Heart left ventricle (tissue), 16 donors: ENCODE measurements at regions of chr1 and their contacts with region 1.

Region 1: GRCh38 chr1:63367215-63368103 is at the start of gene ALG6:
- DNase-seq: peak; percentile 94 to 97 (median 96)
- ATAC-seq: peak; percentile 98 to 100 (median 100)
- H3K4me3 ChIP-seq: peak within 1 kb of the TSS; percentile 70 to 98 (median 91)
- H3K27ac ChIP-seq: peak within 1 kb of the TSS in 11 of 12 donors; percentile 75 to 88 (median 83)
- H3K4me1 ChIP-seq: peaks cover 0 to 22% (median 7%) of the 10 kb centered on the region in 12 donors
- H3K27me3 ChIP-seq: peaks cover 0 to under 1% (median 0%) of the 10 kb centered on the region in 9 donors
- CTCF ChIP-seq: peak in 4 of 12 donors; percentile 6 to 36 (median 16)
- POLR2A ChIP-seq: peak in 1 of 2 donors; percentile 89
- total RNA-seq, gene ALG6: 3.0 to 7.4 (median 3.9) TPM

Region 2: DNA sequence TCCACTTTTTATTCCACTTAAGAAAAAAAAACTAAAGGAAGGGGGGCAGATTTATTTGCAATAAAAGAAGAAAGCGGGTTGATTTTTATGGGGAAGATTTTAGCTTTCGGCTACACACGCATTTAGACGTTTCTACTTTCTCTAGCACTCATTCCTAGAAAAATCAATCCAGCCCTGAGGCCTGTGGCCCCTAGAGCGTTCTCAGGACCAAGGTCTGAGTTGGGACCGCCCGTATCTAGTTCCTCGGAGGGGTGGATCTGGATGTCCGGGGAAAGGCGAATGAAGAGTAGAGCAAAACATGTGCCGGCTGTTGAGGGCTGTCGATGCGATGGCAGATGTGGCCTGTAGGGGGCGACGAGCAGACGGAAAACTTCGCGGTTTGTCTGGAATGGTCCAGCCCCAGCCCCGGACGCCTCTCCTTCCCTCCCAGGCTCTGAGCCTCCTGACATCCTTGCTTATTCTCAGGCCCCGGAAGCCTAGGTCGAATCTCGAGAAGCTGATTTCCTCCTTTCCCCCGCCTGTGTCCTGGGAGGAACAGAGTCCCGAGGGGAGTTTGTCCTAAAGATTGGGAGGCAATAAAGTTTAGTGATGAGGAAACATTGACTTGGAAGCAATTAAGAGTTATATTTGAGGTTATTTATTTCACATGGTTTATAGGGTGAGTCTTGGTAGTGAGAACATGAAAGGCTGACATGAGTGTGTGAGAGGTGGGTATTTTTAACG is 39.9 kb before region 1 on chr1:
- intact Hi-C with region 1: no loop called
- DNase-seq: peak in 3 of 5 donors; percentile 36 to 75 (median 47)
- ATAC-seq: peak in 3 of 4 donors; percentile 52 to 60 (median 58)
- H3K4me3 ChIP-seq: no peak overlapping the region
- H3K27ac ChIP-seq: no peak overlapping the region
- H3K4me1 ChIP-seq: peaks cover 0 to 35% (median 5%) of the 10 kb centered on the region in 12 donors
- H3K27me3 ChIP-seq: peaks cover 70 to 100% (median 97%) of the 10 kb centered on the region in 9 donors
- CTCF ChIP-seq: peak; percentile 42 to 70 (median 56)
- POLR2A ChIP-seq: no peak

Region 3: DNA sequence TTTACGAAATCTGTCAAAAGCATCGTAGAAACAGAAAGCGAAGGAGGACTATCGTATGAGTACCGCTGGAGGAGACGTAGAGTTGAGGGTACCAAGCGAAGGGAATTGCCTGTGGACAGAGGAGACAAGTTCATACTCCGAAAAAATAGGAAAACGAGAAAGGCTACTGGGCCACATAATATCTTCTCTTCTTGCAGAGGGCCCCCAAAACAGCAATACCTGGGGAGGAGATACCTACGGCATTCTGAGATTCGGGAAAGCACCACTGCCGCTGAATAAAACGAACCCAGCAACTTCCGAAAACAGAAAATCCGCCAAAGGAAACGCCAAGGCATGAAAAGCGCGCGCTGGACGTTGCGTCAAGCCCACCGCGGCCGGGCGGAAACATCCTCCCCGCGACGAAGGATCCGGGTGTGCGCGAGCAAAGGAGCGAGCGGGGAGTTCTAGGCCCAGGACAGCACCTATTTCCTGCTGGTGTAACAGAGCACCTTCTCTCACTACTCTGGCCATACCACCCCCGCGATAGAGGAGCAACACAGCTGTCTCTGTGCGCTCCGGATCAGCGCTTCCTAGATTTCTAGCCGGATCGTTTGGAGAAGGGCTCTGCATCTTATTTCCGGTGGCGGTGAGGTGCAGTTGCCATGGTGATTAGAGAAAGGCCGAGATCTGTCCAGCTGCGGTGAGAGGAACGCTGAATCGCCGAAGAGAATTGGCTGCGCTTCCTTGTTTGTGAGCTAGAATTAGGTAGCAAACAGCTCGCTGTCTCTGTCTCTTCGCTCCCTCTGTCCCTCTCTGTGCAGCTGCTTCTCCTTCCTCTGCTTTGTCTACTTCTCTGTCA is 155.7 kb after region 1 on chr1 and contains the starts of genes EFCAB7 and ITGB3BP:
- intact Hi-C with region 1: loop called in 2 of 10 experiments (anchors 10 kb)
- DNase-seq: peak; percentile 81 to 91 (median 83)
- ATAC-seq: peak; percentile 85 to 96 (median 96)
- H3K4me3 ChIP-seq: peak within 1 kb of the TSS; percentile 44 to 91 (median 71)
- H3K27ac ChIP-seq: peak within 1 kb of the TSS; percentile 41 to 97 (median 90)
- H3K4me1 ChIP-seq: peaks cover 0 to 29% (median 10%) of the 10 kb centered on the region in 12 donors
- H3K27me3 ChIP-seq: no peaks in the 10 kb centered on the region
- CTCF ChIP-seq: no peak
- POLR2A ChIP-seq: peak in 1 of 2 donors; percentile 38
- total RNA-seq, gene EFCAB7: 3.4 to 10.7 (median 7.9) TPM
- total RNA-seq, gene ITGB3BP: 2.0 to 17.2 (median 10.1) TPM